Heart left ventricle (tissue), 16 donors: ENCODE measurements at regions of chr12 and their contacts with region 1.

Region 1: DNA sequence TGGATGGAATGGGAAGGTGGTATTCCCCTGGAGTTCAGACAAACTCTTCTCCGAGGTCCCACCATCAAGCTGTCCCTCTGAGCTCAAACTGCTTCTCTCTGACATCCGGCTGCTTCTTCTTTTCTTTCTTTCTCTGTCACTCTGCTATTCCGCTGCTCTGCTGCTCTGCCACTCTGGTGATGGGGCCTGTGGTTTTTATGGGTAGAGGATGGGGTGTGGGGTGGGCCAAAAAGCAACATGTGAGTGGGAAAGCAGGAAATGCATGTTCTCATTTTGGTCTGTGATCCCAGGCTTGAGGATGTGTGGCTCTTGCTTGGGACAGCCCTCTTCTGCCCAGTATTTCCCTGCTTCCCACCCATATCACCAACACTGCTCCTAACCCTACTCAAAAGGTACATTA is 30.6 kb downstream of the CLECL1 start:
- DNase-seq: no peak
- ATAC-seq: no peak
- H3K4me3 ChIP-seq: no peak overlapping the region
- H3K27ac ChIP-seq: peak overlapping the region in 1 of 12 donors; percentile 43
- H3K4me1 ChIP-seq: peaks cover 0 to 71% (median 17%) of the 10 kb centered on the region in 12 donors
- H3K27me3 ChIP-seq: no peaks in the 10 kb centered on the region
- CTCF ChIP-seq: no peak
- POLR2A ChIP-seq: no peak

Region 2: GRCh38 chr12:8603856-8604255 is 1098.4 kb before region 1 on chr12:
- intact Hi-C with region 1: no loop called
- DNase-seq: no peak
- ATAC-seq: no peak
- H3K4me3 ChIP-seq: no peak overlapping the region
- H3K27ac ChIP-seq: no peak overlapping the region
- H3K4me1 ChIP-seq: peaks cover 0 to 3% (median 0%) of the 10 kb centered on the region in 12 donors
- H3K27me3 ChIP-seq: peaks cover 0 to 12% (median 0%) of the 10 kb centered on the region in 9 donors
- CTCF ChIP-seq: no peak
- POLR2A ChIP-seq: no peak

Region 3: DNA sequence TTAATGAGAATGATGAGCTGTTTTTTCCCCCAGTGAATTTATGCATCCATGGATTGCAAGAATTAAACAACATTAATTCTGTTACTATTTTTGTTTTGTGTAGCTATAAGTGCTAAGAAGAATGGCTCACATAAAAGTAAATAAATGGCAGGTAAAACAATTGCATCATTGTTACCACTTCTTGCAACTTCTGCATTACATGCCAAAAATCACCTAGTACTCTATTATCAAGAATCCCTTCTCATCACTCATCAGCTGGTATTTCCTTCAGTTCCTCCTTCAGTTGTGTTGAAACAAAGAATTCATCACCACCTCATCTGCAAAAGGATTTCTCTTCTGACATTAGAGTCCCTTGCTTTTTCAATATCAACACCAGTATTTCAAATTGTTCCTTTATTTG is 587.3 kb before region 1 on chr12:
- intact Hi-C with region 1: no loop called
- DNase-seq: no peak
- ATAC-seq: no peak
- H3K4me3 ChIP-seq: peak overlapping the region; percentile 15 to 71 (median 64)
- H3K27ac ChIP-seq: peak overlapping the region; percentile 73 to 90 (median 83)
- H3K4me1 ChIP-seq: peaks cover 5 to 81% (median 36%) of the 10 kb centered on the region in 12 donors
- H3K27me3 ChIP-seq: no peaks in the 10 kb centered on the region
- CTCF ChIP-seq: no peak
- POLR2A ChIP-seq: no peak

Region 4: GRCh38 chr12:9647825-9648700 is 54.2 kb before region 1 on chr12:
- intact Hi-C with region 1: loop called in 5 of 10 experiments (anchors 1 to 5 kb)
- DNase-seq: peak; percentile 82 to 90 (median 84)
- ATAC-seq: peak; percentile 89 to 97 (median 95)
- H3K4me3 ChIP-seq: peak overlapping the region; percentile 38 to 84 (median 70)
- H3K27ac ChIP-seq: peak overlapping the region; percentile 83 to 95 (median 89)
- H3K4me1 ChIP-seq: peaks cover 0 to 45% (median 25%) of the 10 kb centered on the region in 12 donors
- H3K27me3 ChIP-seq: no peaks in the 10 kb centered on the region
- CTCF ChIP-seq: no peak
- POLR2A ChIP-seq: peak in 1 of 2 donors; percentile 76

Region 5: GRCh38 chr12:9736936-9737705 is 34.9 kb after region 1 on chr12:
- intact Hi-C with region 1: loop called in 1 of 10 experiments (anchors 2 kb)
- DNase-seq: no peak
- ATAC-seq: peak in 2 of 4 donors; percentile 28 to 68
- H3K4me3 ChIP-seq: no peak overlapping the region
- H3K27ac ChIP-seq: peak overlapping the region; percentile 30 to 80 (median 64)
- H3K4me1 ChIP-seq: peaks cover 0 to 49% (median 5%) of the 10 kb centered on the region in 12 donors
- H3K27me3 ChIP-seq: no peaks in the 10 kb centered on the region
- CTCF ChIP-seq: no peak
- POLR2A ChIP-seq: no peak